Ascending aorta (tissue), 2 donors: ENCODE measurements at regions of chr11 and their contacts with region 1.

Region 1: GRCh38 chr11:2825889-2826678 is 59.5 kb downstream of the CDKN1C start:
- DNase-seq: peak; percentile 78 to 95
- H3K4me3 ChIP-seq: peak overlapping the region in 1 of 2 donors; percentile 40
- H3K27ac ChIP-seq: peak overlapping the region; percentile 84 to 94
- H3K4me1 ChIP-seq: peaks cover 13 to 28% of the 10 kb centered on the region in 2 donors
- H3K27me3 ChIP-seq: no peaks in the 10 kb centered on the region
- CTCF ChIP-seq: no peak

Region 2: GRCh38 chr11:1863352-1864216 is 962.5 kb before region 1 on chr11:
- intact Hi-C with region 1: loop called (anchors 5 kb)
- DNase-seq: peak; percentile 81 to 96
- H3K4me3 ChIP-seq: peak overlapping the region; percentile 32 to 34
- H3K27ac ChIP-seq: peak overlapping the region; percentile 86 to 94
- H3K4me1 ChIP-seq: peaks cover 15 to 46% of the 10 kb centered on the region in 2 donors
- H3K27me3 ChIP-seq: no peaks in the 10 kb centered on the region
- CTCF ChIP-seq: no peak

Region 3: GRCh38 chr11:2699531-2700414 is 126.3 kb before region 1 on chr11 and contains the start of gene KCNQ1OT1:
- intact Hi-C with region 1: loop called (anchors 2 kb)
- DNase-seq: peak; percentile 73 to 94
- H3K4me3 ChIP-seq: peak within 1 kb of the TSS; percentile 64 to 80
- H3K27ac ChIP-seq: peak within 1 kb of the TSS; percentile 89 to 96
- H3K4me1 ChIP-seq: peaks cover 0 to 4% of the 10 kb centered on the region in 2 donors
- H3K27me3 ChIP-seq: no peaks in the 10 kb centered on the region
- CTCF ChIP-seq: no peak
- total RNA-seq, gene KCNQ1OT1: 1.5 TPM

Region 4: DNA sequence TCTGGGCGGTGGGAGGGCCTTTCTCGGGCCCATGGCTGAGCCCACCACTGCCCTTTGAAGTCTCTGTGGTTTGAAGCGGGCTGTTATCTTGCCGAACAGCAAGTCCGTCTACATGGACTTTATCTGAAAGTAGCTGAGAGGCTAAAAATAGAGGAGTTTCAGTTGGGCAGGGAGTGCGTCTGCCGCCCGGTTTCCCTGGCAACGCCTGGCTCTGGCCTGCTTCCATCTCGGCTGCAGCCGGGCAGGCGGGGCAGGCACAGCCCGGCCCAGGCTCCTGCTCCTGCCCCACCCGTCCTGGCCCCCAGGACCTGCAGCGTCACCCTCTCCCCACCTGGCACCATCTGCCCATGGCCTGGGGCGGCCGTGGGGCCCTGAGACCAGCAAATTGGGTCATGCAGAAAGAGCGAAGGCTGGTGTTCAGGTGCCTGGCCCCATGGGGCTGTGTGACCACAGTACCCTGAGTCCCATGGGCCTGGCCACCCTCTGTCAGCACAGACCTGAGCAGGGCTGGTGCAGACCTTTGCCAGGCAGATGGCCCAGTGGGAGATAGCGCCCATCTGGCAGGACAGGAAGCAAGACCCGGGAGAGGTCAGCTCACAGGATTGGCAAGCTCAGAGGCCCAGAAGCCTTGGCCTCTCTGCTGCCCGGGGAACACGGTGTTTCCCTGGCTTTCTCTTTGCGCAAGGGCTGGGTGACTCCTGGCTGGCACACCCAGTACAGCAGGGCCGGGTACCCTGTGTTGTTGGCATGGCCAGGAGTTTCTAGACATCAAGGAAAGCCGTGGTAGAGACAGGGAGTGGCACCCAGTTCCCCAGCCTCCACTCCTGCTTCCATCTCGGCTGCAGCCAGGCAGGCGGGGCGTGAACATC is 47.2 kb before region 1 on chr11:
- intact Hi-C with region 1: loop called (anchors 1 kb)
- DNase-seq: peak; percentile 47 to 89
- H3K4me3 ChIP-seq: peak overlapping the region; percentile 18 to 53
- H3K27ac ChIP-seq: peak overlapping the region; percentile 68 to 81
- H3K4me1 ChIP-seq: peaks cover 11 to 36% of the 10 kb centered on the region in 2 donors
- H3K27me3 ChIP-seq: no peaks in the 10 kb centered on the region
- CTCF ChIP-seq: peak in 2 of 3 experiments; percentile 13 to 52

Region 5: DNA sequence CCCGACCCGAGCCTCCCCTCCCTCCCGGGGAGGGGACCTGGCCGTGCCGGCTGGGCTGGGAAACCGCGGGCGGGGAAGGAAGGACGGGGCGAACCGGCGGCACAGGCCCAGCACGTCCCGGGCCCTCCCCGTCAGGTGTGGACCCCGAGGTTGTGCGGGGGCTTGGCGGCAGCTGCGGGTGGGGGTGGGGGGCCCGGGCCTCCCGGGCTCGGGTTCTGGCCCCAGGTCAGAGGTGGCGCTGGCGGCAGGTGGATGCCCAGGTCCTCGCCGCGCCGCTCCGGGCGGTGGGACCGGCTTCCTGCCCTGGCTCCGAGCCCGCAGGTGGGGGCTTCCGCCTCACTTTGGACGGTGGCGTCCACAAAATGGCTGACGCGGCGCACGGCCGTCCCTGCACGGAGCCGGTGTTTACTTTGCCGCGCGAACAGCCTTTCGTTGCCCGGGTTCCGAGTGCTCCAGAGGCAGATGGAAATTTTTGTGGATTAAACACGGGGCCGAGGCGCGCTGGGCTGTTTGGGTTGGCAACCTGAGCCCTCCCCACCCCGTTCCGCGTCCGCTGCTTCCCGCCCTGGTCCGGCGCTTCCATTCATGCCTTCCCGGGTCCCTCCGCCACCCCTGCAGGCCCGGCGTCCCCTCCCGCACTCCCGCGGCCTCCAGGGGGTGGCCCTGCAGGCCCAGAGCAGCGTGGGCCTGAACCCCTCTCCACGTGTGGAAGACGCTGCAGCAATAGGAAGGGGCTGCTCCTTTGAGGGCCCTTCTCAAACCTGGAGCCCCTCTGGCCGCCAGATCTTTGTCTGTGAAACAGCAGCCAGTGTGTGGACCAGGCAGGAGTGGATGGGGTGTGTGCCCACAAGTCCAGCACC is 34.3 kb before region 1 on chr11:
- intact Hi-C with region 1: loop called (anchors 5 kb)
- DNase-seq: peak in 1 of 2 donors; percentile 65
- H3K4me3 ChIP-seq: peak overlapping the region; percentile 48 to 78
- H3K27ac ChIP-seq: peak overlapping the region in 1 of 2 donors; percentile 49
- H3K4me1 ChIP-seq: no peaks in the 10 kb centered on the region
- H3K27me3 ChIP-seq: no peaks in the 10 kb centered on the region
- CTCF ChIP-seq: no peak

Region 6: DNA sequence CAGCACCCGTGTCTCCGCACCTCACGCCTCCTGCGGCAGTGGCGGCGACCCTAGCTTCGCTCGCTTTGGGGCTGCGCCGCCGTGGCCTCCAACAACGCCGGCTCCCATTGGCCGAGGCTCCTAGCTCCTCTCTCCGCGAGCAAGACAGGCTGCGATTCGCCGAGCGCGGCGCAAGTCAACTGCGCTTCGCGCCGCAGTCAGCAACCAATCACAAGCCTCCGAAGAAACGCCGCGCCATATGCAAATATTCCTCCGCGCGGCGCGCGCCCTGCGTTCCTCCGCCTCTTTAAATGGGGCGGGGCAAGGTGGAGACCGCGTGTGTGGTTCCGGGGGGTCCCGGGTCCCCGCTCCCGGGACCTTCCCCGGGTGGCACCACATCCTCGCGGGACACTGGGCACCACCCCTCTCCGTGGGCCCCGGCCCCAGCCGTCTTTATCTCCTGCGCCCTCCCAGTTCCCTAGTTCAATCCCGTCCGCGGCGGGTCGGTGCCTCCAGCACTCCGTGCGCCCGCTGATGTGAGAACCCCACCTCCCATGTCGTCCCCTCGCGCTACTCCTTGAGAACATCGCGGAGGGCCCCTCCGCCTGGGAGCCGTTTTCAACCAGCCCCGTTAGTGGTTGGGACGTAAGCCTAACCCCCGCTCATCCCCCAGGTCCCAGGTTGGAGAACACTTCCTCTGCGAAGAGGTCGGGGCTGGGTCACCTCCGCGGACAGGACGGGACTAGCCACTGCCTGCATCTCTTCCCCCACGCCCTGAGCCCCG is 166.3 kb after region 1 on chr11 and contains the start of gene NAP1L4:
- intact Hi-C with region 1: loop called (anchors 5 kb)
- DNase-seq: peak; percentile 85 to 97
- H3K4me3 ChIP-seq: peak within 1 kb of the TSS; percentile 74 to 80
- H3K27ac ChIP-seq: peak within 1 kb of the TSS; percentile 71 to 90
- H3K4me1 ChIP-seq: peaks cover 6 to 27% of the 10 kb centered on the region in 2 donors
- H3K27me3 ChIP-seq: no peaks in the 10 kb centered on the region
- CTCF ChIP-seq: no peak
- total RNA-seq, gene NAP1L4: 54.5 TPM

Region 7: GRCh38 chr11:3341298-3341697 is 515.2 kb after region 1 on chr11:
- intact Hi-C with region 1: no loop called
- DNase-seq: no peak
- H3K4me3 ChIP-seq: no peak overlapping the region
- H3K27ac ChIP-seq: no peak overlapping the region
- H3K4me1 ChIP-seq: no peaks in the 10 kb centered on the region
- H3K27me3 ChIP-seq: no peaks in the 10 kb centered on the region
- CTCF ChIP-seq: peak; percentile 28 to 54 (median 32)